SK-N-SH (cell line): ENCODE measurements at regions of chr12 and their contacts with region 1.

Region 1: DNA sequence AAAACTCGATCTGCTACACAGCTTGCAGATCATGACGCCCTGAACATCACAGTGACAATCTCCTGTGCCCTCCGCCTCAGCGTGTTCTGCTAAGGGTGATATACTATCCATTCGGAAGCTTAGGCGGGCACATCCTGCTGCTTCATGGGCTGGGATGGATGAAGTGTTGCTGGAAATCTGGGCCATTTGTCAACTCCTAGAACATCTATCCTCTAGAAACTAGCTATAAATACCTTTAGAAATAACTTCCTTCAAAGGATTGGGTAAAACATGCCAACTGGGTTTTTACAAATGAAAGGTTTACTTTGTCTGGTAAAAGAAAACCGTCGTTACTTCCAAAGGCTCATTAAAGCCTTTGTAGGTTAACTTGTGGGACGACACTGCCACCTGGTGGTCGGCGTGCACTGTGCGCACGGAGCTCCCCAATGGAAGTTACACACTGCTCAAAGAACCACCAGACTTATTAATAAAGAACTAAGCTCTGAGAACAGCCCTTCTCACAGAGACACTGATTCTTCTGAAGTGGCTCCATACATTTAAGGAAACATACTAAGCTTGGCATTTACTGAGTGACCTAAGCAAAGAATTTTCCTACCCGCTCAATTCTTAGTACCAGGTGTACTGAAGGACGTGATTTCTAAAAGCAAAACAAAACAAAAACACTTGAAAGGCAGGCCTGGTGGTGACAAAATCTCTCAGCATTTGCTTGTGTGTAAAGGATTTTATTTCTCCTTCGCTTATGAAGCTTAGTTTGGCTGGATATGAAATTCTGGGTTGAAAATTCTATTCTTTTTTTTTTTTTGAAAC is 21.6 kb upstream of the CACNA2D4 start:
- DNase-seq: peak; percentile 81
- H3K4me3 ChIP-seq: no peak overlapping the region; a peak in 1 of 4 replicates
- H3K27ac ChIP-seq: peak overlapping the region in 1 of 2 experiments; percentile 50; a peak in 1 of 4 replicates
- H3K4me1 ChIP-seq: peaks cover 0 to 31% of the 10 kb centered on the region in 2 experiments; a peak in 2 of 4 replicates
- H3K27me3 ChIP-seq: no peaks in the 10 kb centered on the region
- CTCF ChIP-seq: peak; percentile 98
- EP300 ChIP-seq: no peak
- RAD21 ChIP-seq: peak; percentile 98

Region 2: GRCh38 chr12:1634590-1635191 is 305.3 kb before region 1 on chr12:
- CTCF ChIA-PET with region 1: interaction called, 20 read pairs
- POLR2A ChIA-PET with region 1: no interaction called
- DNase-seq: peak; percentile 83
- H3K4me3 ChIP-seq: peak overlapping the region in 1 of 2 experiments; percentile 37; a peak in 1 of 4 replicates
- H3K27ac ChIP-seq: no peak overlapping the region
- H3K4me1 ChIP-seq: peaks cover 0 to 10% of the 10 kb centered on the region in 2 experiments; a peak in 2 of 4 replicates
- H3K27me3 ChIP-seq: no peaks in the 10 kb centered on the region
- CTCF ChIP-seq: peak; percentile 84
- EP300 ChIP-seq: no peak
- RAD21 ChIP-seq: peak; percentile 84

Region 3: DNA sequence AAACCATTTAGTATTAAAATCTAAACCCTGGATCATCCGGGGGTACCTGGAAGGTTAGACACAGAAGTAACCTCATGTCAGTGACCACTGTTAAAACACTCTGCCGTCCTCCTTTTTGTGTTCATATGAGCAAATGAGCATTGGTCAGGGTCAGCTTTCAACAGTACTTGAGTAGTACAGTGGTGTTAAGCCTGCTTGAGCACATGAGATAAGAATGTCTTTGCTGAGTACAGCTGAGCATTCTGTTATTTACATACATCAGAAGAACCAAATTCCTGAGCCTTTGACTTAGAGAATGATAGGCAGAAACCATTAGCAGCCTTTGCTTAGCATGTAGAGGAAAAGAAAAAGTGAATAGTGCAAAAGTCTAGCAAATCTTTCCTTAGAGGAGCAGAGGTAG is 158.2 kb before region 1 on chr12:
- CTCF ChIA-PET with region 1: interaction called, 12 read pairs
- POLR2A ChIA-PET with region 1: no interaction called
- DNase-seq: no peak
- H3K4me3 ChIP-seq: no peak overlapping the region
- H3K27ac ChIP-seq: no peak overlapping the region
- H3K4me1 ChIP-seq: peaks cover 4 to 29% of the 10 kb centered on the region in 2 experiments; a peak in 2 of 4 replicates
- H3K27me3 ChIP-seq: no peaks in the 10 kb centered on the region
- CTCF ChIP-seq: no peak
- EP300 ChIP-seq: no peak
- RAD21 ChIP-seq: no peak

Region 4: GRCh38 chr12:1820191-1820895 is 119.7 kb before region 1 on chr12 and contains the start of gene LRTM2:
- CTCF ChIA-PET with region 1: interaction called, 19 read pairs
- POLR2A ChIA-PET with region 1: no interaction called
- DNase-seq: peak; percentile 72
- H3K4me3 ChIP-seq: no peak within 1 kb of the TSS
- H3K27ac ChIP-seq: no peak within 1 kb of the TSS
- H3K4me1 ChIP-seq: peaks cover 0 to 56% of the 10 kb centered on the region in 2 experiments; a peak in 1 of 4 replicates
- H3K27me3 ChIP-seq: peaks cover 25% of the 10 kb centered on the region; the same call in 1 of the 2 replicates
- CTCF ChIP-seq: no peak
- EP300 ChIP-seq: no peak
- RAD21 ChIP-seq: no peak
- polyA plus RNA-seq, gene LRTM2: not detected in 2 replicates

Region 5: DNA sequence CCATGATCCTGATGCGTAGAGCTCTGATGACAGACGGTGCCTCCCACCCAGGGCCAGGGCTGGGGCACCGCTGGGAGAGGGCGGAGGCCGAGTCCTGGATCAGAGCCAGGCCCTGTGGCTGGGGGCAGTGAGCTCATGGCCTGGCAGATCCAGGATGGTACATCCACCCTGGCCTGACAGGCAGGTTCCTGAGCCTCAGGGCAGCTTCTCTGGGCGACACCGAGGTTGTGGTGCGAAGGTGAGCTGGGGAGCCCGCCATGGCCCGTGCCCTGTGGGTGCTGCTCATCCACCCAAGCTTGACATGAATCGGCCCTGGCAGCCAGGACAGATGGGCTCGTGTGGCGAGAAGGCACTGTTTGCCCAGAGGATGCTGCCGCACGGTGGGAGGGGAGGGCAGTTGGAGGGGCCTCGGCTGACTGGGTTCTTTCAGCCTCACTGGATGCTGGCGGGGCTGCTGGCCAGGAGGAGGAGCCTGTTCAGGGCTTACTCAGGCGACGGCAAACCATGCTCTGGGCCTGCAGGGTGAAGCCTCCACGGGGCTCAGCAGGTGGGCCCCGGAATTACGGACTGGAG is 103.1 kb before region 1 on chr12:
- CTCF ChIA-PET with region 1: interaction called, 35 read pairs
- POLR2A ChIA-PET with region 1: interaction called, 7 read pairs
- DNase-seq: peak; percentile 86
- H3K4me3 ChIP-seq: no peak overlapping the region
- H3K27ac ChIP-seq: peak overlapping the region in 1 of 2 experiments; percentile 98; a peak in 2 of 4 replicates
- H3K4me1 ChIP-seq: peaks cover 4 to 65% of the 10 kb centered on the region in 2 experiments; a peak in 3 of 4 replicates
- H3K27me3 ChIP-seq: no peaks in the 10 kb centered on the region
- CTCF ChIP-seq: no peak
- EP300 ChIP-seq: peak in 1 of 2 experiments; percentile 27; a peak in 1 of 4 replicates
- RAD21 ChIP-seq: no peak

Region 6: GRCh38 chr12:1956716-1957115 is 16.7 kb after region 1 on chr12:
- CTCF ChIA-PET with region 1: interaction called, 23 read pairs
- POLR2A ChIA-PET with region 1: no interaction called
- DNase-seq: no peak
- H3K4me3 ChIP-seq: no peak overlapping the region
- H3K27ac ChIP-seq: no peak overlapping the region
- H3K4me1 ChIP-seq: no peaks in the 10 kb centered on the region
- H3K27me3 ChIP-seq: no peaks in the 10 kb centered on the region
- CTCF ChIP-seq: no peak
- EP300 ChIP-seq: no peak
- RAD21 ChIP-seq: no peak

Region 7: DNA sequence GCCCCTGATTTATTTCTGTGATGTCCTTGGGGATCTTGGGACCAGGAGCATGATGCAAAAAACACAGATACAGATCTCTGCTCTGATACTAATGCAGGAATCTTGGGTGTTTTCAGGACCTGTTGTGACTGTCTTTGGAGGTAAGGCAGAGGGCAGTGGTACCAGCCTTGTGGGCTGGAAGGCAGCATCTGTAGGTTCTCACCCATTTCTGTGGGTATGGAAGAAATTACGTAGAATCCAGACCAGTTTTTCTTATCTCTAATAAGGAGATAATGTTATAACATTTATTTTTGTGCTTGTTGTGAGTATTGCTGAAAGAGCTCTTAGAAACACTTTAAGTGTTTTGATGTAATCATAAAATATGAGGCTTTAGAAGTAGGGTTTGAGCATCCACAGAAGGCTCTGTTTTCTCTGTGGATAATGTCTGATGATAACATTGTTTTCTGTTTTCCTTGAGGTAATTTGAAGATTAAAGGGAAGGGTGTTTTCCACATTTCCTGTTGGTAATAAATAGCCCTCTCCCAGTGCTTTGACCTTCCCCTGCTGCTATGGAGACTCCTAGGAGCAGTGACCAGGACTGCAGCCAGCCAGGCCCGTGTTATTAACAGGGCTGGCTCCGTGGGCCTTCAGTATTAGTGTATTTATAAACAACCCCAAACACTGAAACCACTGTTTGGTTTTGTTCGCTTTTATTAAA is 73.7 kb after region 1 on chr12:
- CTCF ChIA-PET with region 1: interaction called, 10 read pairs
- POLR2A ChIA-PET with region 1: no interaction called
- DNase-seq: peak; percentile 69
- H3K4me3 ChIP-seq: no peak overlapping the region
- H3K27ac ChIP-seq: peak overlapping the region; percentile 16 to 93; a peak in 3 of 4 replicates
- H3K4me1 ChIP-seq: peaks cover 0 to 47% of the 10 kb centered on the region in 2 experiments; a peak in 2 of 4 replicates
- H3K27me3 ChIP-seq: no peaks in the 10 kb centered on the region
- CTCF ChIP-seq: no peak
- EP300 ChIP-seq: peak in 1 of 2 experiments; percentile 80; a peak in 2 of 4 replicates
- RAD21 ChIP-seq: peak; percentile 40